AG04449 (cell line): ENCODE measurements at regions of chr14 and their contacts with region 1.

Region 1: DNA sequence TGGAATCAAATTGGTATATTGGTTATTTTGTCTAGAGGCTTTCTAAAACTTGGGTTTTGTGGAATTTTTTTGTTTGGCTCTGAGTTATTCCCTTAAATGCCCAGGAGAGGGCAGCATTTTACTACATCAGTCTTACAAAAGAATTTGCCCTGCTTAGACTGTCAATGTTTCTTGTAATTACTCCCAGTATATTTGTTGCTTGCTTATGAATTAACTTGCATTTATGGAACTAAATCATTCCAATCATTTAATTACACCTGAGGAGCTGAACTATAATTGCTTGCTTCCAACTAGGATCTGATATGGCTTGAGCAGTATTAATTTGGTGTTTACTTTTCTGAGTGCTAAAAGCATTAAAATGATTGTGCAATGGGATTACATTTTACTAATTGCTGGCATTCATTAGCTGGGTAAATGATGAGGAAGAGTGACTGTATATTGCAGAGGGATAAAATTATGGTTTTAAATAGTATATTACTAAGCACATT is 48.7 kb downstream of the MIPOL1 start:
- DNase-seq: peak; percentile 19
- H3K4me3 ChIP-seq: no peak overlapping the region
- CTCF ChIP-seq: peak; percentile 19

Region 2: GRCh38 chr14:37187294-37187693 is 59.2 kb before region 1 on chr14:
- CTCF ChIA-PET with region 1: no interaction called
- POLR2A ChIA-PET with region 1: no interaction called
- DNase-seq: no peak
- H3K4me3 ChIP-seq: no peak overlapping the region
- CTCF ChIP-seq: no peak

Region 3: GRCh38 chr14:37257501-37258070 is 11.1 kb after region 1 on chr14:
- CTCF ChIA-PET with region 1: interaction called, 25 read pairs
- POLR2A ChIA-PET with region 1: no interaction called
- DNase-seq: no peak
- H3K4me3 ChIP-seq: no peak overlapping the region
- CTCF ChIP-seq: no peak

Region 4: DNA sequence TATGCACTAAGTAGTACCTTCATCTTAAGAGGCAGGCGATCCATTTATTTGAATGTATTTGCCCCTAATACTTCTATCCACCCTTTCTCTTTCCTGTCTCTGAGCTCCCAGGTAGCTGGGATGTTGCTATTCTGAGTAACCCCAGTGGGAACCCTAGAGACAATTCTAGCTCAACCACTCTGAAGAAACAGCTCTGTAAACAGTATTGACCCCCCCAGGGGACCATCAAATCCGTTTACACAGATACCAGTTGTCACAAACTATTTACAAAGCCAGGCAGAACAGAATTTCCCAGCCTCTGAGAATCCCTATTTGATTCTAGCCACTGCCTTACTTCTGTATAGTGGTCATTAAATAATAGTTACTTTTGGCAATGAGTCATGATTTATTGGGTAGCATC is 16.2 kb after region 1 on chr14:
- CTCF ChIA-PET with region 1: interaction called, 25 read pairs
- POLR2A ChIA-PET with region 1: no interaction called
- DNase-seq: no peak
- H3K4me3 ChIP-seq: no peak overlapping the region
- CTCF ChIP-seq: no peak

Region 5: DNA sequence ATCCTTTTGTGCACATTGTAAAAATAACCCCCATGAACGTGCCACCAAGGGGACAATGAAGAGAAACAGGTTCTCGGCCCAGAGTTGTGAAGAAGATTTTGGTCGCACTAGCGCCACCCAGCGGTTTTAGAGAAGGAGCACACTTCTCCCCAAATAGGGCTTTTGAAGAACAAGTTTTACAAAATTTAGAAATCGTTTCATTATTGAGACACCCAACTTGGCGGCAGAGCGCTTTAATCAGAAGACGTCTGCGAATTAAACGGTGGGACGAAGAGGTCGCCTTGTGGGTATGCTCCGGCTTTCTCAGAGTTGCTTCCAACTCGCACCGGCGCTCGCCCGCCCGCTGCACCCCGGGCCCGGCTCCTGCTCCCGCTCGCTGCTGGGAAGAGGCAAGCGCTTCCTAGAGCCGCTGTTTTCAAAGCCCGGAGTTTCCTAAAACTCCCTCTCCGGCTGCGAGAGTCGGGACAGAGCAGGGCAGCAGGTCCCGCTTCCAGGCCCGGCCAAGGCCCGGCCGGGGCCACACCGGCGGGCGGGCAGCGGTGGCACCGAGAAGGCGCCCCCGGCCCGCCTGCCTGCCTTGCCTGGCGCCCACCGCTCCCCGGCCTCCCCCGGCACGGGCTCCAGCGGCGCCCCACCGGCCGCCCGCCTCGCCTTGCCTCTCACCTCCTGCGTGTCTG is 347.9 kb after region 1 on chr14:
- CTCF ChIA-PET with region 1: interaction called, 29 read pairs
- POLR2A ChIA-PET with region 1: no interaction called
- DNase-seq: peak; percentile 9
- H3K4me3 ChIP-seq: peak overlapping the region; percentile 63
- CTCF ChIP-seq: peak; percentile 67

Region 6: DNA sequence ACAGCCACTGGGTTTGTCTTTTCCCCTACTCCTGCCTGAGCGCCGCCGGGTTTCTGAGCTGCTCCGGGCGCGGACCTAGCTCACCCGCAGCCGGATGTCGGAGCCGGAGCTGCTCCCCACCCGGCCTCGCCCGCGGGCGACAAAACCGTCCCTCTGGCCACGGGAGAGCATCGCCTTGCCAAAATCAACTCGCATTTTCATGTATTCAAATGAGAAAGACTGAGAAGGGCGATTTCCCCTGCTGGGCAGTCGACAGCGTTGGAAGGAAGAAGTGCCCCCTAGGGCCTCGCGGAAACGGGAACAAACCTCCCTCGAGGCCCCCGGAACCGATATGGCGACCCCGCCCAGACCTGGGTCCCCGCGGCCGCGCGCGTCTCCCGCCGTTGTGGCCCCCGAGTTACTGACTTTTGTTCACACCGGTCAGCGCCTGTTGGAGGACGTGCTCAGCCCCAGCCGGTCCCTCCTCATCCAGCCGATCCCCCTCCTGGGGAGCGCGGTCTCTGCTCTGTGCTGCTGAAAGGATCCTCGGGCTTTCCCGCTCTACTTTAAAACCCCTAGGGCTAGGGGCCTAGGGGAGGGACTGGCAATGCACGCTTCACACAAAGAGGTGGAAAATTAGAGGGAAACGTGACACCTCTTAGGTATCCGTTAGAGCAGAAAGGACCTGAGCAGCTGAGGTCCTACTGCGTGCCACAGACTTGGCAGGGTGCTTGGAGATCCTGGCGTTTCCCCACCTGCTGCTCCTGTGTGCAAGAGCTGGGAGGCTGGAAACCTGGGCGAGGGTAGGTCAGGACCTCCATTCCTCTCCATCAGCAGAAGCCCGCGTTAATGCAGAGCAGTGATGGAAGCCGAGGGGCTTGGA is 353.3 kb after region 1 on chr14:
- CTCF ChIA-PET with region 1: interaction called, 29 read pairs
- POLR2A ChIA-PET with region 1: no interaction called
- DNase-seq: no peak
- H3K4me3 ChIP-seq: peak overlapping the region; percentile 18; the same call in 1 of the 2 replicates
- CTCF ChIP-seq: no peak